Activated B cell treated with CpG ODN at 0.5 μM for 24 hours (primary cell): ENCODE measurements at regions of chr4 and their contacts with region 1.

Region 1: GRCh38 chr4:139651282-139652194 is 14.1 kb upstream of the MGST2 start:
- DNase-seq: peak; percentile 41
- ATAC-seq: peak; percentile 84
- H3K4me3 Mint-ChIP-seq: no peak overlapping the region
- H3K27ac Mint-ChIP-seq: no peak overlapping the region
- H3K4me1 Mint-ChIP-seq: peaks cover 4% of the 10 kb centered on the region
- H3K27me3 Mint-ChIP-seq: peaks cover 10% of the 10 kb centered on the region
- CTCF ChIP-seq: peak; percentile 80

Region 2: GRCh38 chr4:139099366-139099982 is 552.1 kb before region 1 on chr4:
- CTCF ChIA-PET with region 1: no interaction called
- POLR2A ChIA-PET with region 1: no interaction called
- intact Hi-C with region 1: loop called (anchors 5 kb)
- DNase-seq: peak; percentile 28
- ATAC-seq: peak; percentile 90
- H3K4me3 Mint-ChIP-seq: no peak overlapping the region
- H3K27ac Mint-ChIP-seq: no peak overlapping the region
- H3K4me1 Mint-ChIP-seq: no peaks in the 10 kb centered on the region
- H3K27me3 Mint-ChIP-seq: no peaks in the 10 kb centered on the region
- CTCF ChIP-seq: no peak

Region 3: DNA sequence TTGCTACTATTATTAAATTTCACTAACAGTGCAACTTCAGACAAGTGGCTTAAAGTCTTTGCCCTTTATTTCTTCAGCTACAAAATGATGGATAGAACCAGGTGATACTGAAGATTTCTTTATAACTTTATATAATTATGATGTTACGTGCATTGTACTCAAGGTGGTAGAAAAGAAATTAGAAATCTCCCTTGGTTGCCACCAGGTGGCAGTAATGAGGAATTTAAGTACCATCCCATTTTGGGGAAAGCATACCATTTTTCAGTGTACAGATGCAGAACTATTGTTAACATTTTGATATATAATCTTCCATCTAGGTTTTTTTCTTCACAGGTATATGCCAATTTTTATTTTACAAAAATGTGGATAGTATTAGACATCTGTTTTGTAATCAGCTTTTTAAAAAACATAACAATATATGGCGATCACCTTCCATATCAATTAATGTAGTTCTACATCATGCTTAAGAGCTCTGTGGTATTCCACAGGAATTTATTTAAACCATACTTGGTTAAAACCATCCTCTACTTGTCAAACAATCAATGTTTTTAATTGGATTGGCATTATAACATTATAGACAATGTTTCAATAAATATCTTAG is 235.4 kb before region 1 on chr4:
- CTCF ChIA-PET with region 1: no interaction called
- POLR2A ChIA-PET with region 1: no interaction called
- intact Hi-C with region 1: loop called (anchors 1 kb)
- DNase-seq: no peak
- ATAC-seq: no peak
- H3K4me3 Mint-ChIP-seq: no peak overlapping the region
- H3K27ac Mint-ChIP-seq: no peak overlapping the region
- H3K4me1 Mint-ChIP-seq: peaks cover 19% of the 10 kb centered on the region
- H3K27me3 Mint-ChIP-seq: no peaks in the 10 kb centered on the region
- CTCF ChIP-seq: peak; percentile 99

Region 4: DNA sequence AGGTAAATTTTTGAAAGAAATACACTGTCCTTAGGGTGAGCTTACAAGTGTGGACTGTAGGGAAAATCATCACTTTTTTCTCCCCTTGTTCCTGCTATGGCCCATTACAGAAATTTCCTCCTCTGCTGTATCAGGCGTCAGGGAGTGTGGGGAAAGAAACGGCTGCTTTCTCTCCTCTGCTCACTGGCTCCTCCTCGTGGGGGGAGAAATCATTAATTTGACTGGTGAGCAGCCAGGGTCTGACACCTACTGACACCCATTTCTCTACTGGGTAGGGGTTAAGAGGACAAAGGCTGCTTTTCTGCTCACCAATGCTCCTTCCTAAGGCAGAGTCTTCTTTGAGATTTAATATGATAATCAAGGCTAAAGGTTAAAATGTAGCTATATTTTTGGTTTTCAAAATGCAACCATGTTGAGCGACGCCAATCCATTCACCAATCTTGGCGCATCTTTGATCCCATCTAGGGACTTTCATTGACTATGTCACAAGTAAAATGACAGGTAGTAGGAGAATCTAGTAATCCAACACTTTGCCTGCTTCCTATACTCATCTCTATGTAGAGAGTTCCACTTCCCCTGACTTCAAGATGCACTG is 120.6 kb before region 1 on chr4:
- CTCF ChIA-PET with region 1: no interaction called
- POLR2A ChIA-PET with region 1: no interaction called
- intact Hi-C with region 1: loop called (anchors 1 kb)
- DNase-seq: peak; percentile 19
- ATAC-seq: peak; percentile 60
- H3K4me3 Mint-ChIP-seq: no peak overlapping the region
- H3K27ac Mint-ChIP-seq: no peak overlapping the region
- H3K4me1 Mint-ChIP-seq: peaks cover 4% of the 10 kb centered on the region
- H3K27me3 Mint-ChIP-seq: no peaks in the 10 kb centered on the region
- CTCF ChIP-seq: no peak

Region 5: DNA sequence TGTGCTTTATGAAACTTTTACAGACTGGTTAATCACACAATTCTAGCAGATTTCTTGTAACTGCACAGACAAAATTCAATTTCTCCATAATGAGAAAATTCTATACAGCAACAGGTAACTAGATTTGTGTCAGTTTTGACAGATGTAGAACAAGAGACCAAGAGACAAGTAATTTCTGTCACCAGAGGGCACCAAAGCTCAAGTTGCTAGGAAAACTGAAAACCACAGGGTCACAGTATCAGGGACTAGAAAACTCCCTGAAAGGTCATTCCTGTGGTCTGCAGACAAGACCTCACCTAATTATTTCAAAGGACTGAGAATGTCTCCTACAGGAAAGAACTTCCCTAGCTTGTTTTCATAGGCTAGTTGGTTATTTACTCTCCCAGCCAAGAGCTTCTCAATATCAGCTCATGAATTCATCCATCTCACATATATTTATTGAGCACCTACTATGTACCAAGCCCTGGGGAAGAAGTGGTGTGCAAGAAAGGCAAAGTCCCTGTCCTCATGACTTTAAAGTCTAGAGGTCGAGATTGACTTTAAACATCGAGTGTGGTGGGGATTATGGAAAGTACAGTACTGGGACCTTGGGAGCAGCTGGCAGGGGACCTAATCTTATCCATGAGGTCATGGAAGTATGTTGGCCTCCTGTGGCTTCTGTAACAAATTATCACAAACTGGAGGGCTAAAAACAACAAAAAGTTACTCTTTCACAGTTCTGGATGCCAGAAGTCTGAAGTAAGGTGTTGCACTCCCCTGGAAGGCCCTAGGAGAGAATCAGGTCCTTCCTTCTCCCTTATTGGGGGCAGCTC is 47.8 kb before region 1 on chr4:
- CTCF ChIA-PET with region 1: interaction called, 36 read pairs
- POLR2A ChIA-PET with region 1: no interaction called
- intact Hi-C with region 1: loop called (anchors 1 kb)
- DNase-seq: no peak
- ATAC-seq: peak; percentile 45
- H3K4me3 Mint-ChIP-seq: no peak overlapping the region
- H3K27ac Mint-ChIP-seq: no peak overlapping the region
- H3K4me1 Mint-ChIP-seq: peaks cover 9% of the 10 kb centered on the region
- H3K27me3 Mint-ChIP-seq: peaks cover 5% of the 10 kb centered on the region
- CTCF ChIP-seq: no peak